ENCODE measurements at regions of chr22 and their contacts with region 1.

Region 1: GRCh38 chr22:37752466-37753087 is 55.2 kb upstream of the GCAT start:
- DNase-seq: peak; percentile 91 to 96 (median 95)
- ATAC-seq: peak; percentile 74 to 87 (median 82)
- H3K4me3 ChIP-seq: peak overlapping the region in 6 of 12 donors; percentile 5 to 29 (median 13)
- H3K27ac ChIP-seq: peak overlapping the region; percentile 90 to 100 (median 98)
- H3K4me1 ChIP-seq: peaks cover 32 to 74% (median 69%) of the 10 kb centered on the region in 12 donors
- H3K27me3 ChIP-seq: no peaks in the 10 kb centered on the region
- CTCF ChIP-seq: peak in 6 of 12 donors; percentile 14 to 30 (median 22)
- POLR2A ChIP-seq: peak in 1 of 2 donors; percentile 30

Region 2: GRCh38 chr22:37501610-37502341 is 250.8 kb before region 1 on chr22:
- intact Hi-C with region 1: no loop called
- DNase-seq: peak in 4 of 5 donors; percentile 73 to 87 (median 81)
- ATAC-seq: peak; percentile 73 to 87 (median 76)
- H3K4me3 ChIP-seq: peak overlapping the region in 4 of 12 donors; percentile 7 to 25 (median 18)
- H3K27ac ChIP-seq: peak overlapping the region; percentile 47 to 94 (median 78)
- H3K4me1 ChIP-seq: peaks cover 0 to 89% (median 52%) of the 10 kb centered on the region in 12 donors
- H3K27me3 ChIP-seq: peaks cover 0 to 5% (median 0%) of the 10 kb centered on the region in 9 donors
- CTCF ChIP-seq: no peak
- POLR2A ChIP-seq: no peak

Region 3: DNA sequence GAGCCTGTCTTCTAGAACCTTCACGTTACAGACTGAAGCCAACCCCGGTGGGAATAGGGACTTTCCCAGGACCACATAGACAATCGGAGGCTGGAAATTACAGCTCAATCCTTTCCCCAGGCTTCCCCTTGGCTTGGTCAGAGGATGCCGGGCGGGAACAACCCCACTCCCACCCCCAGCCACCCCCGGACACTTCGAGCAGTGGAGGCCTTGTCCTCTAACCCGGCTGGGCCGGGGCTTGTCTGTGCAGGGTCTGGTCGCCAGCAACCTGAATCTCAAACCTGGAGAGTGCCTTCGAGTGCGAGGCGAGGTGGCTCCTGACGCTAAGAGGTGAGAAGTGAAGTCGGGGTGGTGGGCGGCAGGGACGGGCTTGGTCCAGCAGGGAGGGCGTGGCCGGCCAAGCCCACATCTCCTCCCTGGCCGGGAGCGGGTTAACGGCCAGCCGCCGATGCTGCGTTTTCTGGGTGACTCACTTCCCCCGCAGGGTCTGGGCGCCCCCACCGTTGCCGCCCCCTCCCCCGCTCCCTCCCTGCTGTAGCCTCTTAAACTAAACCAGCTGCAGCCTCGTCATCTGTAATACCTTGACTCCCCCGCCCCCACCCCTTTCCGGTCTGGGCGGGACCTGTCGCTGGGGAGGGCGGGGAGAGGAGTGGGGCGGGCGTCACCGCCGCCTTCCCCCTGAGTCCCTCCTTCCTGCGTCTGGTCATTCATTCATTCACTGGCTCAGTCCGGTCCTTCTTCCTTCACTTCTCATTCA is 75.7 kb before region 1 on chr22:
- intact Hi-C with region 1: loop called in 2 of 10 experiments (anchors 5 to 10 kb)
- DNase-seq: peak; percentile 88 to 91 (median 90)
- ATAC-seq: peak in 3 of 4 donors; percentile 48 to 59 (median 48)
- H3K4me3 ChIP-seq: peak overlapping the region; percentile 52 to 92 (median 71)
- H3K27ac ChIP-seq: peak overlapping the region; percentile 74 to 99 (median 96)
- H3K4me1 ChIP-seq: peaks cover 3 to 68% (median 39%) of the 10 kb centered on the region in 12 donors
- H3K27me3 ChIP-seq: no peaks in the 10 kb centered on the region
- CTCF ChIP-seq: no peak
- POLR2A ChIP-seq: no peak

Region 4: DNA sequence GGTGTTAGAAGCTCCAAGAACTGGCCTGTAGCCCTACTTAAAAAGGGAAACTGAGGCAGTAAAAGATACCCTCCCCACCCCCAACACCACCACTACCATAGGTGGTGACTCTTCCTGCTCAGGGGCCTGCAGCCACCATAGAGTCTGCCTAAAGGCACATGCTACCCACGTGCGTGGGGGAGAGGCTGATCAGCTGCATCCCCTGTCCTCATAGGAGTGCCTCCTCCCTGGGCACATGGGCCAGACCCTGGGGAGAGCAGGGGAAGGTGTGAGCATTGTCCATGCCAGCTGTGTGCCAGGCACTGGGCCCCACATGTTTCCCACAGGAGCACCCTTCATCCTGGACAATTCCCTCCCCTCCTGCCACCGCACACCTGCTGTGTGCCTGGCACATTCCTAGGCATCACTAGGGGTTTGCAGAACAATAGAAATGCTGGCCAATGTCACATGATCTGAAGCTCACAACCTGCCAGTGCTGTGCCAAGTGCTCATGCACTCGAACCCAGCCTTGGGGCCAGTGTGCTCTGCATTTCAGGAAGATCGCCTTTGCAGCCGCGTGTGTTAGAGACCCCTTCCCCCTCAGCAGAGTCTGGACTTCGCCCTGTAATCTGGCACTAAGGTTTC is 13.5 kb after region 1 on chr22:
- intact Hi-C with region 1: loop called in 1 of 10 experiments (anchors 1 kb)
- DNase-seq: no peak
- ATAC-seq: peak in 1 of 4 donors; percentile 24
- H3K4me3 ChIP-seq: no peak overlapping the region
- H3K27ac ChIP-seq: no peak overlapping the region
- H3K4me1 ChIP-seq: peaks cover 0 to 12% (median 0%) of the 10 kb centered on the region in 12 donors
- H3K27me3 ChIP-seq: no peaks in the 10 kb centered on the region
- CTCF ChIP-seq: no peak
- POLR2A ChIP-seq: no peak

Region 5: GRCh38 chr22:37802310-37803194 is 50.0 kb after region 1 on chr22:
- intact Hi-C with region 1: loop called in 4 of 10 experiments (anchors 2 to 10 kb)
- DNase-seq: peak; percentile 71 to 80 (median 73)
- ATAC-seq: peak in 3 of 4 donors; percentile 16 to 29 (median 26)
- H3K4me3 ChIP-seq: peak overlapping the region; percentile 54 to 83 (median 66)
- H3K27ac ChIP-seq: peak overlapping the region in 7 of 12 donors; percentile 40 to 69 (median 53)
- H3K4me1 ChIP-seq: peaks cover 0 to 43% (median 21%) of the 10 kb centered on the region in 12 donors
- H3K27me3 ChIP-seq: peaks cover 0 to 2% (median 0%) of the 10 kb centered on the region in 9 donors
- CTCF ChIP-seq: no peak
- POLR2A ChIP-seq: no peak

Region 6: GRCh38 chr22:37807410-37808293 is 55.1 kb after region 1 on chr22 and contains the start of gene GCAT:
- intact Hi-C with region 1: loop called in 4 of 10 experiments (anchors 2 to 10 kb)
- DNase-seq: peak; percentile 95 to 97 (median 97)
- ATAC-seq: peak; percentile 87 to 92 (median 90)
- H3K4me3 ChIP-seq: peak within 1 kb of the TSS; percentile 48 to 85 (median 74)
- H3K27ac ChIP-seq: peak within 1 kb of the TSS in 10 of 12 donors; percentile 52 to 97 (median 80)
- H3K4me1 ChIP-seq: peaks cover 0 to 57% (median 30%) of the 10 kb centered on the region in 12 donors
- H3K27me3 ChIP-seq: no peaks in the 10 kb centered on the region
- CTCF ChIP-seq: no peak
- POLR2A ChIP-seq: peak in 1 of 2 donors; percentile 56
- total RNA-seq, gene GCAT: 25.2 to 83.6 (median 39.7) TPM

Measured in heart left ventricle (tissue), 16 donors.